ENCODE measurements at regions of chr3 and their contacts with region 1.

Region 1: DNA sequence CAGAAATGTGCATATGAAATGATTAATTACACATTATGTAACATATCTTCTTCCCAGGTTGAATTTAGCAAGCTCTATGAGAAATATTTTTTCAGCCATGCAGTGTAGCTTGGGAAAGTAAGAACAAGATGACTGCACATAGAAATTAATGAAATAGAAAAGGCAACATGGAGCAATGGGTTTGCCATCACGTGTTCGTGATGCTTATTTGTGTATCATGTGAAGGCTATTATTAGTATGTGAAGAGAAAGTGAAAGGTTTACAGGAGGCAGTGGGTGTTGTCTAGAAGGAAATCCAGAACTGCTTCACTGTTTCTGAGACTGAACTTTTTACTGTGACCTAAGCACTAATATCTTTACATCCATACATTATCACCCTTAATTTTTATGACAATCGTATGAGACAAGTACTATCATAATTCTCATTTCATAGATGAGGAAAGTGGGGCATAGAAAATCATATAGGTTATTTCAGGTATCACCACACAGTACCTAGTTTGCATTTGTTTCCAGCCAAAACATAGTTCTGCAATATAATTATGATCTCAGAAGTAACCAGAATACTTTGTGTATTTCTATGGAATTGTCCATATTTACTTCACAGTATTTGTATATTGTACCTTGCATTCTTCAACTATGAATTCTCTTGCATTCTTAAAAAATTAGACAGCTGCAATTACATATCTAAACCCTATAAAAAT is 14.9 kb downstream of the SERPINI1 start:
- DNase-seq: no peak
- ATAC-seq: peak in 1 of 2 donors; percentile 52
- H3K4me3 Mint-ChIP-seq: peak overlapping the region in 3 of 10 donors; percentile 1 to 54 (median 49)
- H3K27ac Mint-ChIP-seq: peak overlapping the region in 4 of 10 donors; percentile 12 to 78 (median 40)
- H3K4me1 Mint-ChIP-seq: peaks cover 6 to 51% (median 9%) of the 10 kb centered on the region in 4 donors
- H3K27me3 Mint-ChIP-seq: no peaks in the 10 kb centered on the region

Region 2: GRCh38 chr3:167734498-167735232 is 15.8 kb before region 1 on chr3 and contains the start of gene PDCD10:
- POLR2A ChIA-PET with region 1: interaction called, 10 read pairs
- DNase-seq: peak; percentile 88 to 99 (median 97)
- ATAC-seq: peak; percentile 86 to 88
- H3K4me3 Mint-ChIP-seq: no peak within 1 kb of the TSS
- H3K27ac Mint-ChIP-seq: no peak within 1 kb of the TSS
- H3K4me1 Mint-ChIP-seq: peaks cover 14 to 40% (median 15%) of the 10 kb centered on the region in 4 donors
- H3K27me3 Mint-ChIP-seq: no peaks in the 10 kb centered on the region
- polyA plus RNA-seq, gene PDCD10: 62.1 to 84.8 (median 65.4) TPM

Measured in naive thymus-derived CD8-positive, alpha-beta T cell (primary cell).